Activated T-helper 1 cell treated with anti-CD3 and anti-CD28 coated beads, Interleukin-12 subunit alpha, Interleukin-12 subunit beta, Interleukin-2, Interleukin-4 antibody, amounts not matched to agents 30 ng/mL and 10 ng/mL and 1 ng/mL, durations not matched to agents 14 hours and 24 hours and 36 hours (primary cell): ENCODE measurements at regions of chr13 and their contacts with region 1.

Region 1: DNA sequence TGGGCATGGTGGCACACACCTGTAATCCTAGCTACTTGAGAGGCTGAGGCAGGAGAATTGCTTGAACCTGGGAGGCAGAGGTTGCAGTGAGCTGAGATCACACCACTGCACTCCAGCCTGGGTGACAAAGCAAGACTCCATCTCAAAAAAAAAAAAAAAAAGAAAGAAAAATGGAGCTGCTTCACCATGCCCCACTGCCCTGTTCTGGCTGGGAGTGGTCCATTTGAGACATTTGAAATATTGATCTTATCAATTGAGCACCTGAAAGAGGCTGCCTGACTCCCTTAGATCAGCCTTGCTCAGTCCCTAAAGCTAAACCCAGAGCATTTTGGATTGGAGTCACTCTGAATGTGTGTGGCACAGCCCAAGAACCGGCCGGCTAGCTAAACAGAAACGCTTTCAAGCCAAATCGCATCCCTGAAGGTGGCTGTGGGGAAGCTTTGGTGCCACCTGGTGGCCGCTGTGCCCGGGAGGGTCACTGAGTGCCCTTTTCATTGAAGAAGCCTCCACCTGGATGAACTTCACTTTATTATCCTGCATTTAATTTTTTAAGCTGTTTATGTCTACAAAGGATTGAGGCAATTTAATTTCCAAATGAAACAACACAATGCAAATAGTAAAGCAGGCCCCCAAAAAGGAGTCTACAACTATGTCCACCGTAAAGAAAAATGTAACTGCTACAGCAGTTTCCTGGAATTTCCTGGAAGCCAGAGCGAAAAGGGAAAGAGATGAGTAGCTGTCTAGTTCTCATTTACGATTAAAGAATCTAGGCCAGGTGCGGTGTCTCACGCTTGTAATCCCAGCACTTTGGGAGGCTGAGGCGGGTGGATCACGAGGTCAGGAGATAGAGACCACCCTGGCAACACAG is 53.1 kb upstream of the SERPINE3 start:
- DNase-seq: peak; percentile 57
- H3K4me3 Mint-ChIP-seq: no peak overlapping the region
- H3K27ac Mint-ChIP-seq: no peak overlapping the region
- H3K4me1 Mint-ChIP-seq: peaks cover 20% of the 10 kb centered on the region
- H3K27me3 Mint-ChIP-seq: peaks cover 3% of the 10 kb centered on the region

Region 2: GRCh38 chr13:51050021-51050830 is 236.1 kb before region 1 on chr13:
- intact Hi-C with region 1: no loop called
- DNase-seq: no peak
- H3K4me3 Mint-ChIP-seq: no peak overlapping the region
- H3K27ac Mint-ChIP-seq: no peak overlapping the region
- H3K4me1 Mint-ChIP-seq: no peaks in the 10 kb centered on the region
- H3K27me3 Mint-ChIP-seq: peaks cover 16% of the 10 kb centered on the region

Region 3: DNA sequence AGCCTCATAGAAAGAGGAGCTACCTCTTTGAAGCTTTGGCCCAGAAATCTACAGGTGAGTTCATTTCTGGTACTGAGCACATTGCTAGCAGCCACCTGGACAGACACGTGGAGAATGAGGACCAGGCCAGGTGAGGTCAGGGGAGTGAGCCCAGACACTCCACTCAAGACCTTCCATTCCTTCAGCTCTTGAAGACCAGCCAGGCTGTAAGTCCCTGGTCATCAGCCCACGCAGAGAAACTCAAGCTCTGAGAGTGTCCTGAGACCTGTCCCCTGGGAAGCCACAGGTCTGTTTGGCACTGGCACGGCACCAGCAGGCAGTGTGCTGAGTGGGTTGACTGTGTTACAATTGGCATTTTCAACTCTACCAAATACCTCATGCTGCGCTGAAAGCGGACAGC is 202.7 kb before region 1 on chr13:
- intact Hi-C with region 1: no loop called
- DNase-seq: no peak
- H3K4me3 Mint-ChIP-seq: no peak overlapping the region
- H3K27ac Mint-ChIP-seq: no peak overlapping the region
- H3K4me1 Mint-ChIP-seq: no peaks in the 10 kb centered on the region
- H3K27me3 Mint-ChIP-seq: peaks cover 6% of the 10 kb centered on the region

Region 4: DNA sequence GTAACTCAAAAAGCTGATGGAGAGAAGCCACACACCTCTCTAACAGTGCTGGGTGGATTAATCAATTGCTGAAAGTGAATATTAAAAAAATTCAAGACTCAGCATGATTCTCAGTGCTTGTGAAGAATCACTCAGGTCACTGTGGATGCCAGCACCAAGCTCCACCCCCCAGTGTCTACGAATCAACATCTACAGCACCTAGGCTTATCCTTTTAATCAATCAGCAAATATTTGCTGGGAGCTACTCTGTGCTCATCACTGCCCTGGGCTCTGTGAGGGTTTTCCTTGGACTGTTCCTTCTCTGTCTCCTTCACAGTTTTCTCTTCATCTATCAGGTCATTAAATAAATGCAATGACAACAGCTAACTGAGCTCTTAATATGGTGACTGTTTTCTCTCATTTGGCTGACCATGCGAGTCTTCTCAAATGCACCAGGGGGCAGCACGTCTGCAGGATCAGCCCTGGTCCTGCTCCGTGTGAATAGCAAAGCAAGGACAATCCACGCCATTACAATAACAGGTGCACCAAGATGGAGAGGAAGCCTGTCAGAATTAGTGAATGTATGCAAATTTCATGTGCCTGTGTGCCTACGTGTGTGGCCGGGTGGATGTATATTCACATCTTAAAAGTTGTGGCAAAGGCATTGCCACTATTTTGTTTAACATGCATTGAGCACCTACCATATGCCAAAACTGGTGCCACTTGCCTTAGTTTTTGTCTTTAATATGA is 160.7 kb before region 1 on chr13:
- intact Hi-C with region 1: loop called (anchors 1 kb)
- DNase-seq: peak; percentile 25
- H3K4me3 Mint-ChIP-seq: no peak overlapping the region
- H3K27ac Mint-ChIP-seq: no peak overlapping the region
- H3K4me1 Mint-ChIP-seq: peaks cover 12% of the 10 kb centered on the region
- H3K27me3 Mint-ChIP-seq: peaks cover 9% of the 10 kb centered on the region

Region 5: GRCh38 chr13:51148952-51149573 is 137.3 kb before region 1 on chr13:
- intact Hi-C with region 1: loop called (anchors 1 kb)
- DNase-seq: no peak
- H3K4me3 Mint-ChIP-seq: no peak overlapping the region
- H3K27ac Mint-ChIP-seq: no peak overlapping the region
- H3K4me1 Mint-ChIP-seq: peaks cover 9% of the 10 kb centered on the region
- H3K27me3 Mint-ChIP-seq: peaks cover 4% of the 10 kb centered on the region

Region 6: GRCh38 chr13:51162701-51163100 is 123.7 kb before region 1 on chr13:
- intact Hi-C with region 1: no loop called
- DNase-seq: no peak
- H3K4me3 Mint-ChIP-seq: no peak overlapping the region
- H3K27ac Mint-ChIP-seq: no peak overlapping the region
- H3K4me1 Mint-ChIP-seq: peaks cover 6% of the 10 kb centered on the region
- H3K27me3 Mint-ChIP-seq: peaks cover 6% of the 10 kb centered on the region

Region 7: DNA sequence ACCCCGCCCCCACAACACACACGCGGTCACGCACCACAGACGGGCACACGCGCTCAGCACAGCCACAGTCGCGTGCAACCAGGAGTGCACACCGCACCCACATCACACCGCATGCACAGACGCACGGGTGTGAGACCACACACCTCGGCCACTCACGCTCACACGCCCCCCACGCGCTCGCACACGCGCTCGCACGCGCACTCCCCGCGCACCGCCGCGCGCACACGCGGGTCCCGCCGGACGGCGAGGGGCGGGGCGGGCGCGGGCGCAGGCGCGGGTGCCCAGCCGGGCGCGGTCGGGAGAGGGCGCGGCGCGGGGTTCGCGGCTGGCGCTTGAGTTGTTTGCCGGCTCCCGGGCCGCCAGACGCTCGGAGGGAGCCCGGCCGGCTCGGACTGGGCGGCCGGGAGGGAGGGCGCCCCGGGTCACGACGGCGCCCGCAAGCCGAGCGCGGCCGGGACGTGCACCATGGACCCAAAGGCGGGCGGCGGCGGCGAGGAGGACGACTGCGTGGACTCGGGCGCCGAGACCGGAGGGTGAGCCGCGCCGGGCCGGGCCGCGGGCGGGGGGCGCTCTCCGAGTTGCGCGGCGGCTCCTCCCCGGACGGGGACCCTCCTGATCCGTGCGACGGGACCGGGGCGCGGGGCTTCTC is 64.2 kb before region 1 on chr13 and contains the start of gene FAM124A:
- intact Hi-C with region 1: loop called (anchors 2 kb)
- DNase-seq: peak; percentile 41
- H3K4me3 Mint-ChIP-seq: peak within 1 kb of the TSS; percentile 79
- H3K27ac Mint-ChIP-seq: peak within 1 kb of the TSS; percentile 52
- H3K4me1 Mint-ChIP-seq: no peaks in the 10 kb centered on the region
- H3K27me3 Mint-ChIP-seq: peaks cover 59% of the 10 kb centered on the region
- total RNA-seq, gene FAM124A: 0.67 and 0.91 TPM in 2 replicates

Region 8: DNA sequence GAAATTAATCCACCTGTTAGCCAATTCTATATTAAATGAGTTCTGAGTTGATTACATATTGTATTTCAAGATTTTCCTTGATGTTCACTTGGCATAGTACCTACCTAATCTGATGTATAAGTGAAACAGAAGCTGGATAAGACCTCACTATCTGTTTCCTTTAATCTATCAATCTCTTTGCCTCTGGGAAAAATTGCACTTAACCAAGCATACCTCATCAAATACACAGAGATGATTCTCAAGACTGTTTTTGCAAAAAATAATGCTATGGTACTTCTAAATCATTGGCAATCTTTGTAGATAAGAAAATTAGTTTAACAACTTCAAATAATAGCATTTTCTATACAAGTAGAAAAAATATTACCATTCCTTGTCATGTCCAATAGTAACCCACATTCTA is 108.4 kb after region 1 on chr13:
- intact Hi-C with region 1: no loop called
- DNase-seq: no peak
- H3K4me3 Mint-ChIP-seq: no peak overlapping the region
- H3K27ac Mint-ChIP-seq: no peak overlapping the region
- H3K4me1 Mint-ChIP-seq: peaks cover 11% of the 10 kb centered on the region
- H3K27me3 Mint-ChIP-seq: no peaks in the 10 kb centered on the region